ENCODE measurements at regions of chr16 and their contacts with region 1.

Region 1: GRCh38 chr16:12535535-12536411 is 267.9 kb downstream of the CPPED1 start:
- DNase-seq: peak; percentile 60
- H3K4me3 Mint-ChIP-seq: peak overlapping the region; percentile 42
- H3K27ac Mint-ChIP-seq: peak overlapping the region; percentile 93
- H3K4me1 Mint-ChIP-seq: peaks cover 87% of the 10 kb centered on the region
- H3K27me3 Mint-ChIP-seq: no peaks in the 10 kb centered on the region

Region 2: GRCh38 chr16:12082226-12082887 is 453.4 kb before region 1 on chr16:
- intact Hi-C with region 1: loop called (anchors 5 kb)
- DNase-seq: no peak
- H3K4me3 Mint-ChIP-seq: no peak overlapping the region
- H3K27ac Mint-ChIP-seq: peak overlapping the region; percentile 88
- H3K4me1 Mint-ChIP-seq: peaks cover 39% of the 10 kb centered on the region
- H3K27me3 Mint-ChIP-seq: no peaks in the 10 kb centered on the region

Region 3: GRCh38 chr16:12455287-12455798 is 80.4 kb before region 1 on chr16:
- intact Hi-C with region 1: loop called (anchors 1 kb)
- DNase-seq: peak; percentile 14
- H3K4me3 Mint-ChIP-seq: no peak overlapping the region
- H3K27ac Mint-ChIP-seq: no peak overlapping the region
- H3K4me1 Mint-ChIP-seq: peaks cover 14% of the 10 kb centered on the region
- H3K27me3 Mint-ChIP-seq: no peaks in the 10 kb centered on the region

Region 4: GRCh38 chr16:12613131-12613991 is 77.6 kb after region 1 on chr16:
- intact Hi-C with region 1: loop called (anchors 1 kb)
- DNase-seq: no peak
- H3K4me3 Mint-ChIP-seq: no peak overlapping the region
- H3K27ac Mint-ChIP-seq: peak overlapping the region; percentile 59
- H3K4me1 Mint-ChIP-seq: peaks cover 27% of the 10 kb centered on the region
- H3K27me3 Mint-ChIP-seq: no peaks in the 10 kb centered on the region

Region 5: DNA sequence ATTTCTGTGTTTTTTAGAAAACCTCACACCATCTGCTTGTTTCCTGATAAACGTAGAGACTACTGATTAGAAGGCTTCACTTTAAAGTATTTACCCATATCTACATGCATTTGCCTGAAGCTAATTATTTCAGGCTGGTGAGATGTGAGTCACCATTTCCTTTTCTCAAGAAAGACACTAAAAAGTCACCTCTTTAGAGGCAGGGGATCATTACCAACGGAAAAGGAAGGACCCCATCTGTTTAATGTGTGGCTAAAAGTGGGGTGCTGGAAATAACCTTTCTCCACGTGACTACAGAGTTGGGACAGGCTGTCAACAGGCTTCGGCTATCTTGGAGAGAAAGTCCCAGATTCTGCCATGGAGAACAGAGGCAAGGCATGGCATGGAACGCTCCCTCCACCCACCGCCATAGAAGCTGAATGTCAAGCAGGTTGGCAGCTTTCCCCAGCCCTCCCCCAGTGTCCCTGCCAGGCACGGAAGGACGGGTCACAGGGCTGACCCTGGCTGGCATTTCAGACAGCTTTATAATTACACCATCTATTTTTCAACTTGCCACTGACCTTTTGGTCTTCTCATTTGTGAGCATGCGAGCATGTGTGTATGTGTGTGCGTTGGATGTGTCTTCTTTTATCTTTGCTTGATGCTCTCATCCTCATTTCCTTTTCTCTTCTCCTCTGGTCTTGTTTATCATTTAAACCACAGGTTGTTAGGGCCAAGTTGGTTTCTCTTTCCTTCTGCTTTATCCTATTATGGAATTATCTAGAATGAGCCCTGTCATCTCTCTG is 110.9 kb after region 1 on chr16:
- intact Hi-C with region 1: loop called (anchors 1 kb)
- DNase-seq: peak; percentile 37
- H3K4me3 Mint-ChIP-seq: peak overlapping the region; percentile 46
- H3K27ac Mint-ChIP-seq: peak overlapping the region; percentile 96
- H3K4me1 Mint-ChIP-seq: peaks cover 28% of the 10 kb centered on the region
- H3K27me3 Mint-ChIP-seq: peaks cover 4% of the 10 kb centered on the region

Region 6: GRCh38 chr16:12735805-12736204 is 200.0 kb after region 1 on chr16:
- intact Hi-C with region 1: no loop called
- DNase-seq: no peak
- H3K4me3 Mint-ChIP-seq: no peak overlapping the region
- H3K27ac Mint-ChIP-seq: no peak overlapping the region
- H3K4me1 Mint-ChIP-seq: no peaks in the 10 kb centered on the region
- H3K27me3 Mint-ChIP-seq: no peaks in the 10 kb centered on the region

Region 7: DNA sequence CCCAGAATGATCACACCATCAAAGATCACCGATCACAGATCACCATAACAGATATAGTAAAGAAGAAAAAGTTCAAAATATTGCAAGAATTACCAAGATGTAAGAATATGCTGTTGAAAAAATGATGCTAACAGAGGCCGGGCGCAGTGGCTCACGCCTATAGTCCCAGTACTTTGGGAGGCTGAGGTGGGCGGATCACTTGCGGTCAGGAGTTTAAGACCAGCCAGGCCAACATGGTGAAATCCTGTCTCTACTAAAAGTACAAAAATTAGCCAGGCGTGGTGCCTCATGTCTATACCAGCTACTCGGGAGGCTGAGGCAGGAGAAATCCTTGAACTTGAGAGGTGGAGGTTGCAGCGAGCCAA is 214.8 kb after region 1 on chr16:
- intact Hi-C with region 1: loop called (anchors 1 kb)
- DNase-seq: no peak
- H3K4me3 Mint-ChIP-seq: peak overlapping the region; percentile 48
- H3K27ac Mint-ChIP-seq: peak overlapping the region; percentile 91
- H3K4me1 Mint-ChIP-seq: peaks cover 39% of the 10 kb centered on the region
- H3K27me3 Mint-ChIP-seq: no peaks in the 10 kb centered on the region

Region 8: DNA sequence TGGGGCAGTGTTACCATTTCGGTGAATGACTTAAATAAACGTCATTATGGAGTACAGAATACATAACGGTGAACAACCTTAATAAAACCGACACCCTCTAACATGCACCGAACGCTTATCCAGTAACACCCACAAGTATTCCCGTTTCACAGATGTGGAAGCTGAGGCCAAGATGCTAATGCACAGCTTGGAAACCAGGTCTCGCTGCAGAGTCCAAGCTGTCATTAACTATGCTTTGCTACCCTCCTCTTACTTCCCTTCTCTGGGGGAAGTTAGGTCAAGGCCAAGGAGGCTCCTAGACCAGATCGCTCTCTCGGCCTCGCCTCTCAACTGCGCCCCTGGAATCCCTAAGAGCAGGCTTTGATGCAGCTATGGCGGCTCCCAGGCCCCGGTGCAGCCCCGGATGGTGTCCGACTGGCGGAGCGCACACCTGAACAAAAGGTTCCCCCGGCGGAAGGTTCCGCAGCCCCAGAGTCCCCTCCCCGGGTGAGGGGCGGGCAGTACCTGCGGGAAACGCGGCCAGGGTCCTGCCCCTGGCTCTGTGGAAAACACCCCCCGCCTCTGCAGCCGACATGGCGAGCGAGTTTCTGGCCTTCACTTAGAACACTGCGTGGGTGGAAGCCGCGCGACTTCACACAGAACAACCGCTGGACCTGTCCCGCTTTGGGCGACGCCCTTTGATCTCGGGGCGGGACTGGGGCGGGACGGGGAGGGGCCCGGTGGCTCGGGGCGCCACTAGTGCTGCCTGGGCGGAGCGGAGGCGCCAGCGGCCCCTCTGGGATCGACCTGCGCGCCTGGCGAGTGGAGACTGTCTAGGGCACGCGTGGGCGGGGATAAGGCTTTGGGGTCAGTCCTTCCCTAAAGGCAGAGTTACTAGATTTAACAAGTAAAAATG is 267.7 kb after region 1 on chr16 and contains the start of gene CPPED1:
- intact Hi-C with region 1: loop called (anchors 1 kb)
- DNase-seq: peak; percentile 88
- H3K4me3 Mint-ChIP-seq: peak within 1 kb of the TSS; percentile 95
- H3K27ac Mint-ChIP-seq: peak within 1 kb of the TSS; percentile 92
- H3K4me1 Mint-ChIP-seq: peaks cover 34% of the 10 kb centered on the region
- H3K27me3 Mint-ChIP-seq: no peaks in the 10 kb centered on the region
- total RNA-seq, gene CPPED1: 9.0 and 9.5 TPM in 2 replicates

Region 9: GRCh38 chr16:13110124-13110796 is 574.5 kb after region 1 on chr16:
- intact Hi-C with region 1: no loop called
- DNase-seq: no peak
- H3K4me3 Mint-ChIP-seq: no peak overlapping the region
- H3K27ac Mint-ChIP-seq: no peak overlapping the region
- H3K4me1 Mint-ChIP-seq: no peaks in the 10 kb centered on the region
- H3K27me3 Mint-ChIP-seq: no peaks in the 10 kb centered on the region

Measured in activated T-helper 2 cell treated with anti-CD3 and anti-CD28 coated beads, Interferon-gamma antibody, Interleukin-2, Interleukin-4, amounts not matched to agents 10 μg/mL and 5 μg/mL and 100 μg/mL, durations not matched to agents 14 hours and 24 hours and 36 hours (primary cell).